ENCODE measurements at regions of chr14 and their contacts with region 1.

Region 1: DNA sequence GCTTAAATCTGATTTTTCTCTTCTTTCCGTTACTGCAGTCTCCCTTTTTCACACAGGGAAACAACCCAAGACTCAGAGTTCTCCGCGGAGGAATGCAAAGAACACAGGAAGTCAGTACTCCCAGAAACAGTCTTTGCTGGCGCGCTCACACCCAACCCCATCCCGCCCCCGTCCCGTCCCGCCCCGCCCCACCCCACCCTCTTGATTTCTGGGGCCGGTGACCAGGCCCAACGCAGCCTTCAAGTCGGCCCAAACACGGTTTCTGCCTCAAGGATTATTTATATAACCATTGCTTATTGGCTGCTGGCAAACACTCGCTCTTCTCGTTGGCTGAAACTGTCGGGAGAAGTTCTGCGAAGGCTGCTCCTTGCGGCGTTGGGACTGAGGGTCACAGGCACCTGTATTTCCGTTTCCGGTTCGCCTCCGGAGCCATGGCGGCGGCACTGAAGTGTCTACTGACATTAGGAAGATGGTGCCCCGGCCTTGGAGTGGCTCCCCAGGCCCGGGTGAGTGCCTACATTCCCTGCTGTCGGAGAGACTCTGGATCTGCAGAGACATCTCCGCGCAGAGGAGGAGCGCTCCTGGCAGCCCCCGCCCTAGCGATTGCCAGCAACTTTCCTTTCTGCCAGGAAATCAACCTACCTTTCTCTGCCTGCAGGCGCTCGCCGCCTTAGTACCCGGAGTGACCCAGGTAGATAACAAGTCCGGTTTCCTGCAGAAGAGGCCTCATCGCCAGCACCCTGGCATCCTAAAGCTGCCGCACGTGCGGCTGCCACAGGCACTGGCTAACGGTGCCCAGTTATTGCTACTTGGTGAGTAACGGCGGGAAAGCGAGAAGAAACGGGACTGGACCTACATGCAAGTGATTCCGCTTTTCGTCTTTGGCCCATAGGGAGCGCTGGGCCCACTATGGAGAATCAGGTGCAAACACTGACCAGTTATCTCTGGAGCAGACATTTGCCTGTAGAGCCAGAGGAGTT is at the start of gene METTL17:
- DNase-seq: peak; percentile 97
- H3K4me3 ChIP-seq: peak within 1 kb of the TSS; percentile 88 to 99 (median 96)
- H3K27ac ChIP-seq: peak within 1 kb of the TSS; percentile 86
- H3K4me1 ChIP-seq: peaks cover 34% of the 10 kb centered on the region
- H3K27me3 ChIP-seq: no peaks in the 10 kb centered on the region
- CTCF ChIP-seq: peak; percentile 33 to 53
- total RNA-seq, gene METTL17: 44.6 to 47.8 TPM

Region 2: DNA sequence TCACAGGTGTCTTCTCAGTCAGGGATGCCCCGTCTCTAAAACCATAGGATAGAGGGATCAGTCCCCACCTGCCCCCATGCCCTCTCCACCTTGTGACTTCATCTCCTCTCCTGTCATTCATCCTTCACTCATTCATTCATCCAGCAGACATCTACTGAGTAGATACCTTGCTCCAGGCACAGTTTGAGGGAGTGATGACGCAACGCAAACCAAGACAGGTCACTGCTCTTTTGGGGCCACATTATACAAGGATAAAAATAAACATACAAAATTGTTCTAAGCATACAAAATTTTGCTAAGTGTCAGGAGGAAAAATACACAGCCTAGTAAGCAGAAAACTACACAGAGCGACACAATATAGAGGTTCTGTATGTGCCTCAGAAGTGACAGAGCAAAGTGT is 67.4 kb before region 1 on chr14:
- CTCF ChIA-PET with region 1: no interaction called
- dilution Hi-C with region 1: no loop called
- in situ Hi-C with region 1: no loop called
- intact Hi-C with region 1: no loop called
- DNase-seq: no peak
- H3K4me3 ChIP-seq: no peak overlapping the region
- H3K27ac ChIP-seq: no peak overlapping the region
- H3K4me1 ChIP-seq: no peaks in the 10 kb centered on the region
- H3K27me3 ChIP-seq: no peaks in the 10 kb centered on the region
- CTCF ChIP-seq: no peak

Region 3: GRCh38 chr14:20956376-20956976 is 33.4 kb before region 1 on chr14:
- CTCF ChIA-PET with region 1: no interaction called
- dilution Hi-C with region 1: no loop called
- in situ Hi-C with region 1: no loop called
- intact Hi-C with region 1: no loop called
- DNase-seq: no peak
- H3K4me3 ChIP-seq: no peak overlapping the region
- H3K27ac ChIP-seq: no peak overlapping the region
- H3K4me1 ChIP-seq: no peaks in the 10 kb centered on the region
- H3K27me3 ChIP-seq: peaks cover 3% of the 10 kb centered on the region
- CTCF ChIP-seq: no peak

Region 4: DNA sequence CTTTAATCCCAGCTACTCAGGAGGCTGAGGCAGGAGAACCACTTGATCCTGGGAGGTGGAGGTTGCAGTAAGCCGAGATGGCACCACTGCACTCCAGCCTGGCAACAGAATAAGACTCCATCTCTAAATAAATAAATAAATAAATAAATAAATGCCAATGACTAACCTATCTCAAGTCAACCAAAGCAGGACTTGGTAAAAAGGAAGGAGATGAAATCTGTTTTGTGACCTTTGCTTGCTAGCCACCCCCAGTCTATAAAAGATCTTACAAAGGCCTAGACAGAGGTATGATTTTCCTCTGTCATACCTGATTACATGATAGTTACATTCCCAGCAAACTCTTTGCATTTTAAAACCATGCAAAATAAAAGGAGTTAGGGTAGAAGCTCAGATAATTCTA is 13.6 kb before region 1 on chr14:
- CTCF ChIA-PET with region 1: interaction called, 5 read pairs
- dilution Hi-C with region 1: no loop called
- in situ Hi-C with region 1: no loop called
- intact Hi-C with region 1: loop called (anchors 1 kb)
- DNase-seq: no peak
- H3K4me3 ChIP-seq: no peak overlapping the region
- H3K27ac ChIP-seq: no peak overlapping the region
- H3K4me1 ChIP-seq: peaks cover 17% of the 10 kb centered on the region
- H3K27me3 ChIP-seq: no peaks in the 10 kb centered on the region
- CTCF ChIP-seq: no peak

Measured in mammary epithelial cell (primary cell).